ENCODE measurements at regions of chr2 and their contacts with region 1.

Region 1: GRCh38 chr2:118046634-118047210 is 32.9 kb upstream of the CCDC93 start:
- DNase-seq: no peak
- ATAC-seq: no peak
- H3K4me3 ChIP-seq: no peak overlapping the region
- H3K27ac ChIP-seq: no peak overlapping the region
- H3K4me1 ChIP-seq: peaks cover 0 to 22% (median 0%) of the 10 kb centered on the region in 9 donors
- H3K27me3 ChIP-seq: peaks cover 0 to 82% (median 58%) of the 10 kb centered on the region in 7 donors
- CTCF ChIP-seq: peak in 8 of 9 donors; percentile 35 to 77 (median 64)

Region 2: GRCh38 chr2:117917223-117917917 is 129.4 kb before region 1 on chr2:
- intact Hi-C with region 1: no loop called
- DNase-seq: no peak
- ATAC-seq: peak in 6 of 8 donors; percentile 13 to 64 (median 36)
- H3K4me3 ChIP-seq: no peak overlapping the region
- H3K27ac ChIP-seq: no peak overlapping the region
- H3K4me1 ChIP-seq: peaks cover 0 to 11% (median 0%) of the 10 kb centered on the region in 9 donors
- H3K27me3 ChIP-seq: no peaks in the 10 kb centered on the region
- CTCF ChIP-seq: peak in 5 of 9 donors; percentile 11 to 50 (median 28)

Region 3: DNA sequence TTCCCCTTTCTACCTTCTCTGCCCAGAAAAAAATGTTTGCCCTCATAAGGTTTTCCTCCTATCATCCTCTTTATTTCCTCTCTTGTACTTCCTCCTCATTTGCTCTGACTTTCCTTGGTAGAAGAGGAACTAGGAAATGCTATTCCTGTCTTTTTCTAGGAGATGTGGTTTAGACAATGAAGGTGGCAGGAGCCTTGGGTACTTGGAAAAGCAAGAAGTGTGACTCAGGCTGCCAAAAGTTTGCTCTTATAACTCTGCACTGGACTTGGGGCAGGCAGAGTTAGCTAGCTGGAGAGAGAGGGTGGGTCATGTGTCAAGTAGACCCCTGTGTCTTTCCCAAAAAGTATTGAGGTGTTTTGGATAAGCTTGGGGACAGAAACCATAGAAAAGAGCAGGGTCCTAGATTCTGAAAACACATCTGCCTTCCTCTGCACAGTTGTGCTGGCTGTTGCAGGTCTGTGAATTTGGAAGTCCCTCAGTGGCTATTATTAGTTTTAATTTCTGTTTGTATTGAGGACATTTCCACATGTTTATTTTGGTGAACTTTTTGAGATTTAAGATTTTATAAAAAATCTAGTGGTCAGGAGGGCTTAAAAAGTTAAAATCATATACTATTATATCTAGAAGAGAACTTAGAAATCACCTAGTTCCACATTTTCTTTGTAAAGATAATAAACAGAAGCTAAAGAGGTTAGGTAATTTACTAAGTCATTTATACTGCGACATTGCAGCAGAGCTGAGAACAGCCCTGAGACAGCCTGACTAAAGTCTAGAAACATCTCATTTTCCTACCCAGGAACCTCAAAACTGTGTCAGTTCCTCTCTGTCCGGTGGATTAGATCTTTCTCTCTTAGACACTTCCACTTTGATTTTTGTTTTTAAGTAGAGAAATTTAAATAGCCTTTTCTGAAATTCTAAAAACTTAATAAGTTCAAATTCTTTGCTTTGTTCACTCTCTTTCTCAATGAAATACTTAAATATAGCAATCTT is 57.5 kb after region 1 on chr2:
- intact Hi-C with region 1: no loop called
- DNase-seq: no peak
- ATAC-seq: no peak
- H3K4me3 ChIP-seq: no peak overlapping the region
- H3K27ac ChIP-seq: peak overlapping the region in 1 of 10 donors; percentile 4
- H3K4me1 ChIP-seq: peaks cover 0 to 20% (median 0%) of the 10 kb centered on the region in 9 donors
- H3K27me3 ChIP-seq: no peaks in the 10 kb centered on the region
- CTCF ChIP-seq: no peak

Region 4: DNA sequence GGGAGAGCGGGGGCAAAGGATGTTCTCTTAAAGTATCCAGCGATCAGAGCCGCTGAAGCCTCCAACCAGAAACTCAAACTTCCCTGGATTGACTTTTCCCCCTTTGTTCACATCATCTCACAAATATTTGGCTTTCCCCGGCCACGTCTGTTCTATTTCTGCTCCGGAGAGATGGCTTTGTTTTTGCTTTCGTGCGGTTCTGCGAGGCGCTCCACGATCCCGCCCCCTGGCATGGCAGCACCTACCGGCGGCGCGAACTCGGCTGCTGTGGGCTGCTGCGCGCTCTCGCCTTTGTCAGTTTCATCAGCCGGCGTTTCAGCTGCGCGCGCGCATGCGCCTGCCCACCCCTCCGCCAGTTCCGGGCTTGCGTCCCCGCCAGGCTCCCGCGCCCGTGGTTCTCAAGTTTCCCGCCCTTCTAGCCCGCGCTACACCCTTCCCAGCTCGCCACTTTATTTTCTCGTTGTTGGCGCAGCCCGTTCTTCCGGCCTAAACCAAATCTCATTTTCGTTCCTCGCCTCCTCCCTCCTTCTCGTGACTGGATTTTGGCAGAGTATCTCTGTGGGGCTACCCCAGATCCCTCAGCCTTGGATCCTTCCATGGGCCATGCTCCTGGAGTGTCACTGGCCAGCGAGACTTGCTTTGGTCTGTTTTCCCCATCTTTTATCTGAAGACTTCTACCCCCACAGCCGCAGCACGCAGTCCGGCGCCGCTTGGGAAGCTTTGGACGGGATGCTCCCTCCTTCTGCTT is 139.6 kb after region 1 on chr2:
- intact Hi-C with region 1: loop called in 1 of 10 experiments (anchors 10 kb)
- DNase-seq: peak; percentile 85 to 88
- ATAC-seq: peak; percentile 93 to 98 (median 97)
- H3K4me3 ChIP-seq: peak overlapping the region; percentile 19 to 93 (median 56)
- H3K27ac ChIP-seq: peak overlapping the region in 9 of 10 donors; percentile 22 to 77 (median 65)
- H3K4me1 ChIP-seq: peaks cover 0 to 14% (median 8%) of the 10 kb centered on the region in 9 donors
- H3K27me3 ChIP-seq: peaks cover 0 to 17% (median 9%) of the 10 kb centered on the region in 7 donors
- CTCF ChIP-seq: peak in 1 of 9 donors; percentile 25

Region 5: GRCh38 chr2:118221666-118222594 is 175.2 kb after region 1 on chr2:
- intact Hi-C with region 1: loop called in 1 of 10 experiments (anchors 10 kb)
- DNase-seq: peak in 1 of 2 donors; percentile 21
- ATAC-seq: peak in 7 of 8 donors; percentile 55 to 79 (median 68)
- H3K4me3 ChIP-seq: no peak overlapping the region
- H3K27ac ChIP-seq: no peak overlapping the region
- H3K4me1 ChIP-seq: peaks cover 4 to 28% (median 14%) of the 10 kb centered on the region in 9 donors
- H3K27me3 ChIP-seq: peaks cover 8 to 100% (median 98%) of the 10 kb centered on the region in 7 donors
- CTCF ChIP-seq: peak; percentile 11 to 72 (median 59)

Region 6: GRCh38 chr2:118417406-118418120 is 370.8 kb after region 1 on chr2:
- intact Hi-C with region 1: no loop called
- DNase-seq: no peak
- ATAC-seq: no peak
- H3K4me3 ChIP-seq: no peak overlapping the region
- H3K27ac ChIP-seq: no peak overlapping the region
- H3K4me1 ChIP-seq: no peaks in the 10 kb centered on the region
- H3K27me3 ChIP-seq: peaks cover 0 to 13% (median 3%) of the 10 kb centered on the region in 7 donors
- CTCF ChIP-seq: no peak

Measured in heart right ventricle (tissue), 16 donors.